ENCODE measurements at regions of chr3 and their contacts with region 1.

Region 1: DNA sequence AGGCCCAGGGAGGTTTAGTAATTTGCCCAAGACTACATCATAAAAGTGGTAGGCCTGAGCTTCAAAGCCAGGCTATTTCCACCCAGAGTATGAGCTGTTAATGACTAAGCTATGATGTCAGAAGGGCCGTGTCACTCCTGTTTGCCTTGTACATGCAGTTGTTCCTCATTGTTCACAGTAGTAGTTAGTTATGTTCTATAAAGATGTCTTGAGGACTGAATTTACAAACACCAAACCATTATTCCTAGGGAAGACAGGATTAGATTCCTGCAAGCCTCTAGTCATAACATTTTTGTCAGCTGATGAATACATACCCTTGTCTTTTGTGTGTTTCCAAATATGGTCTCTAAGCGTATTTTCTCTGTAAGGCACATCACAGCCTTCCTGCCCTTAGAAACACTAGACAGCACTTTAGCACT is 20.9 kb upstream of the LARS2 start:
- DNase-seq: no peak
- H3K4me3 ChIP-seq: no peak overlapping the region
- H3K27ac ChIP-seq: no peak overlapping the region
- H3K4me1 ChIP-seq: no peaks in the 10 kb centered on the region
- H3K27me3 ChIP-seq: no peaks in the 10 kb centered on the region
- CTCF ChIP-seq: no peak

Region 2: GRCh38 chr3:45402138-45402537 is 34.7 kb after region 1 on chr3:
- dilution Hi-C with region 1: loop called (anchors 5 kb)
- DNase-seq: no peak
- H3K4me3 ChIP-seq: no peak overlapping the region
- H3K27ac ChIP-seq: no peak overlapping the region
- H3K4me1 ChIP-seq: no peaks in the 10 kb centered on the region
- H3K27me3 ChIP-seq: no peaks in the 10 kb centered on the region
- CTCF ChIP-seq: no peak